GM12878 (cell line): ENCODE measurements at regions of chr2 and their contacts with region 1.

Region 1: DNA sequence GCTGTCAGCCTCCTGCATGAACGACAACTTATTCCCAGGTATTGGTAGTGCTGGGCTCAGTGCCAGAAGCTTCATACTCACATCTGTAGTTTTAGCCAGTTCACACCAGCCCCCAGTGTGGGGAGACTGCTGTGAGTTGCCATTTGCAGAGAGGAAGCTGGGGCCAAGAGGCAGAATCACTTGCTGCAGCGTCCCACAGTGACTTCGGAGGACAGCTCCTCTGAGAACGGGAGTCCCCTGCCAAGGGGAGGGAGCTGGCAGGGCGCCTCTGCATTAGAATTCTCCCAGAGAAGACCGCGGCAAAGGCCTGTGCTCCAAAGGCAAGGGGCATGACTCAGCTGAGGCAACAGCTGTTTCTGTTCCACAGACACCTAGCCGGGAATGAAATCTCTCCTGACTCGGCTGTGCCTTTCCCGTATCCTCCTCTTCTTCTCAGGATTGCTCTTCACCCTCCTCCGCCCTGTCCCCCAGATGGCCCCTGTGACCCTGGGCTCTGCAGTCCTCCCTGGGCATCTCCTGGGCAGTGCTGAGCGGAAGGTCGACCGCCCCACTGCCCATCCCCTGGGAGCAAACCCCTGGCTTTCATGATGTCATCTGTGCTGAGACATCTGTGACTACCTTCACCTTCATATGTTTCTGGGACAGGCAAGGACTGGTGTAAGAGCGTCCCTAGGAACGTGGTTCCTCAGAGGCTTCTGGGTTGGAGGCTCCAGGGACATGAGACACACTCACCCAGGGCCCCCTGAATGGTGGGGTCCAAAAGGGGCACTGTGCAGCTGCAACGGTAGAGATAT is 18.0 kb downstream of the MAL start:
- DNase-seq: peak; percentile 75
- ATAC-seq: peak; percentile 67
- H3K4me3 ChIP-seq: no peak overlapping the region
- H3K27ac ChIP-seq: peak overlapping the region; percentile 51
- H3K4me1 ChIP-seq: peaks cover 48% of the 10 kb centered on the region
- H3K27me3 ChIP-seq: no peaks in the 10 kb centered on the region
- CTCF ChIP-seq: no peak; a peak in 1 of 6 replicates
- EP300 ChIP-seq: no peak
- POLR2A ChIP-seq: no peak
- RAD21 ChIP-seq: no peak

Region 2: GRCh38 chr2:95053543-95053942 is 10.0 kb after region 1 on chr2:
- CTCF ChIA-PET with region 1: interaction called, 47 read pairs
- POLR2A ChIA-PET with region 1: interaction called, 4 read pairs
- RAD21 ChIA-PET with region 1: interaction called, 34 read pairs
- SMC1A ChIA-PET with region 1: interaction called, 25 read pairs
- in situ Hi-C with region 1: no loop called
- intact Hi-C with region 1: no loop called
- DNase-seq: no peak
- ATAC-seq: peak; percentile 25; the same call in 2 of the 3 replicates
- H3K4me3 ChIP-seq: no peak overlapping the region
- H3K27ac ChIP-seq: no peak overlapping the region
- H3K4me1 ChIP-seq: peaks cover 26% of the 10 kb centered on the region
- H3K27me3 ChIP-seq: no peaks in the 10 kb centered on the region
- CTCF ChIP-seq: peak; percentile 23 to 54 (median 35); a peak in 4 of 6 replicates
- EP300 ChIP-seq: no peak
- POLR2A ChIP-seq: no peak
- RAD21 ChIP-seq: peak; percentile 72